Transverse colon (tissue), 4 donors: ENCODE measurements at regions of chr9 and their contacts with region 1.

Region 1: DNA sequence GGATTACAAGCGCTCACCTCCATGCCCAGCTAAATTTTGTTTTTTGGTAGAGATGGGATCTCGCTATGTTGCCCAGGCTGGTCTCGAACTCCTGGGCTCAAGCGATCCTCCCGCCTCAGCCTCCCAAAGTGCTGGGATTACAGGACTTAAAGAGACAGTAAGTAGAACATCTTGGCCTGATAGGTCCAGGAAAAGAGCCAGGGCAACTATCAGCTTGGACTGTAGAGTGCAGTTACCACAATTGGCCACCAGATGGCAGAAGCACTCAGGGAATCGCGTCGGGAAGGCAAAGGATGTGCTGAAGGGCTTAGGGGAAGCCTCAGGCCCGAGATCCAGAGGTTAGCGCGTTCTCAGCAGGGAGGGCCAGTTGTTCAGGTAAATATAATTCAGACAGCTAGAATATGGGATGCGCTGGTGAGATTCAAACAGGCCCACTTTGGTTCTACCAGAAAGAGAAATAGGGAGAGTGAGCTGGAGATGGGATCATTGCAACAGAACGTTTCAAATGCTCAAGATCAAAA is 21.5 kb downstream of the C9orf57 start:
- DNase-seq: peak; percentile 85
- H3K4me3 ChIP-seq: no peak overlapping the region
- H3K27ac ChIP-seq: no peak overlapping the region
- H3K4me1 ChIP-seq: peaks cover 0 to 4% (median 0%) of the 10 kb centered on the region in 4 donors
- H3K27me3 ChIP-seq: no peaks in the 10 kb centered on the region
- CTCF ChIP-seq: peak; percentile 93 to 99 (median 96)
- EP300 ChIP-seq: no peak
- POLR2A ChIP-seq: no peak

Region 2: GRCh38 chr9:71819115-71819739 is 219.7 kb before region 1 on chr9:
- in situ Hi-C with region 1: loop called in 1 of 4 experiments (anchors 10 kb)
- intact Hi-C with region 1: no loop called
- DNase-seq: peak; percentile 32
- H3K4me3 ChIP-seq: no peak overlapping the region
- H3K27ac ChIP-seq: no peak overlapping the region
- H3K4me1 ChIP-seq: peaks cover 0 to 6% (median 0%) of the 10 kb centered on the region in 4 donors
- H3K27me3 ChIP-seq: no peaks in the 10 kb centered on the region
- CTCF ChIP-seq: peak; percentile 60 to 79 (median 72)
- EP300 ChIP-seq: no peak
- POLR2A ChIP-seq: no peak

Region 3: DNA sequence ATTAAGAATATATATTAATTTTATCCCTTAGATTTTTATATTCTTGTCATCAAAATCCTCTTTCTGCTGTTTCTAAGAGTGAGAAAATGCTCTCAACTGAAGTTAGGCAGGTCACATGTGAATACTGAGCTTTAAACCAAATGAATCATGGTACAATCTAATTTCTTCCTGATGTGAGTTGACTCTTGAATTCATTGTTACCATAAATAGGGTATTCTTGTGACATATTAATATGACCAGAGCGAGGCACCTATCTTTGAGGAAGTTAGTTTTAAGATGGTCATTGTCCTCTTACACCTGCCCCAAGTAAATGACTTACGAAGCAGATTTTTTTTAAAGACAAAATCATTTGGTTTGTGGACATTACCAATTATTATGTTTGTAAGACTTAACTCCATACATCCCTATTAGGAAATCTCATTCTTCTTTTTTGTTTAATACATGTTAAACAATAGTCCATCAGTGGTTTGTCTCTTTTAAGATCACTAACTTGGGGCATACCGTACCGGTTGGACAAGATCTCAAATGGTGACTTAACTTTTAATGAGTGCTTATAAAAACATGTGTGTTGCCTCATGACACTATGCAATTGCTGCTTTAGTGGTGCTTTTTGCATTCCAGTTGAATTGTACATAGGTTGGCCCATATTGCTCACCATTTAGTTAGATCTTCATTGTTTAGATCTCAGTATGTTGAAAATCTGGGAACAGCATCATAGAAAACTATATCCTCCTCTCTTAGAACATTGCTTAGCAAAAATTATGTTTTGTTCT is 109.9 kb before region 1 on chr9:
- in situ Hi-C with region 1: no loop called
- intact Hi-C with region 1: no loop called
- DNase-seq: no peak
- H3K4me3 ChIP-seq: no peak overlapping the region
- H3K27ac ChIP-seq: no peak overlapping the region
- H3K4me1 ChIP-seq: peaks cover 0 to 31% (median 8%) of the 10 kb centered on the region in 4 donors
- H3K27me3 ChIP-seq: no peaks in the 10 kb centered on the region
- CTCF ChIP-seq: no peak
- EP300 ChIP-seq: no peak
- POLR2A ChIP-seq: no peak

Region 4: GRCh38 chr9:71985297-71985911 is 53.5 kb before region 1 on chr9:
- in situ Hi-C with region 1: no loop called
- intact Hi-C with region 1: no loop called
- DNase-seq: no peak
- H3K4me3 ChIP-seq: peak overlapping the region in 1 of 4 donors; percentile 15
- H3K27ac ChIP-seq: peak overlapping the region; percentile 42 to 73 (median 72)
- H3K4me1 ChIP-seq: peaks cover 0 to 10% (median 5%) of the 10 kb centered on the region in 4 donors
- H3K27me3 ChIP-seq: no peaks in the 10 kb centered on the region
- CTCF ChIP-seq: peak in 4 of 5 experiments; percentile 18 to 47 (median 20)
- EP300 ChIP-seq: no peak
- POLR2A ChIP-seq: no peak

Region 5: DNA sequence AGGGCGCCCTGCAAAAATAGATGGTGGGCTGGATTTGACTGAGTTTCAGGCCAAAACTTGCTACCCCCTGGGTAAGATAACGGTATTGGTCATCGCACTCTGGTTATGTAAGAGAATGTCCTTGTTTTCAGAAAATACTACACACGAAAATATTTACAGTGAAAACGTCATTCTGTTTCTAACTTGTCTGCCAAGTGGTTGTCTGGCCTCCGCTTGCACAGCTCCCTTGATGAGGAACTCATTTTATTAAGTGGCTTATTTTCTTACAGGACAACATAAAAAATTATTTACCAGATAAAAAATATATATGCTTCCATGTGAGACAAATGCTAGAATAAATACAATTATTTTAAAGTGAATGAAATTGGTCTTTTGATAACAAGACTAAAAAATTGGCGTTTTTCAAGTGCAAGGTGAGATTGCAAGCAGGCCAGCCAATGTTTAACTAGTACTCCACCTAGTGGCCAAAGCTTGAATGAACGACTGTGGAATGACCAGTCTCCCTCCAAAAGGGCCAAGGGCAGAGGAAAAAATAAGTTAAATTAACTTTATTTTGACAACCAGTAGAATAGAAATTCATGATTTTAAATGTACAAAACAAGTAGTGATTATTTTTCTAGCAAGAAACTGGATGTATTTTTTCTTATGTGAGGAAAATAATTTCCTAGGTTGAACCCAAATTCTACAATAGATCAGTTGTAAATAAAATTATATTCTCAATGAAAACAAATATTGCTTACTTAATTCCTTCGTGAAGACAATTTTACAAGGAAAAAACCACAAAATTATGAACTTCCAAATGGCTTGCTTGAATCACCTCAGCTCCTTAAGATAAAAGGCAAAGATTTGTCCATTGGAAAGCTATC is 232.9 kb after region 1 on chr9:
- in situ Hi-C with region 1: loop called (anchors 5 kb)
- intact Hi-C with region 1: loop called (anchors 5 kb)
- DNase-seq: peak; percentile 47
- H3K4me3 ChIP-seq: no peak overlapping the region
- H3K27ac ChIP-seq: no peak overlapping the region
- H3K4me1 ChIP-seq: no peaks in the 10 kb centered on the region
- H3K27me3 ChIP-seq: no peaks in the 10 kb centered on the region
- CTCF ChIP-seq: peak; percentile 81 to 89 (median 87)
- EP300 ChIP-seq: no peak
- POLR2A ChIP-seq: no peak

Region 6: DNA sequence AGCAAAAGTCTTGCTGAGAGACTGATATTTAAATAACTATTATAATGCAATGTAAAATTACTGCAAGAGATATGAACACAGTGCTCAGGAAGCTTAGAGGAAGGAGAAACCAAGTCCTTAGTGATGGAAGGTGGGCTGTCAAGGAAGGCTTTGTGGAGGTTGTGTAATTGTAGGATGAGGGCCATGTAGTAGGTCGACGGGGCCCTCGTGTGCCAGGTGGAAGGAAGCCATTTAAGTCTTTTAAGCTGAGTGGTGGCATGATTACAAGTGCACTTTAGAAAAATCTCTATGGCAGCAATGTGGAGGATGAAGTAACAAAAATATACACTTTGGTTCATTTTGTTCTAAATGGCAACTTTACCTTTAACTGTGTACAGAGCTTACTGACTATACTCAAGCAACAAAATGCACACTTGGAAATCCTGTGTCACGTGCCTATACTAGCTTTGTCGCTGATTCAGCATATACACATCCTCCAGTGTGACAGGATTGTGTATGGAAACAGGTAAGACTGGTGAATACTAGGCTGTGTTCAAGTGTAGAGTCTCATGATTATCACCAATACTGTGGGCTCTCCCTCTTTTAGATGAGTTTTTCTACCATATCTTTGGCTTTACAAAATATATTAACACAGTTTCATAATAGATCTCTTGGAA is 561.1 kb after region 1 on chr9:
- in situ Hi-C with region 1: loop called in 1 of 4 experiments (anchors 25 kb)
- intact Hi-C with region 1: no loop called
- DNase-seq: no peak
- H3K4me3 ChIP-seq: no peak overlapping the region
- H3K27ac ChIP-seq: no peak overlapping the region
- H3K4me1 ChIP-seq: peaks cover 0 to 8% (median 5%) of the 10 kb centered on the region in 4 donors
- H3K27me3 ChIP-seq: no peaks in the 10 kb centered on the region
- CTCF ChIP-seq: no peak
- EP300 ChIP-seq: no peak
- POLR2A ChIP-seq: no peak

Region 7: DNA sequence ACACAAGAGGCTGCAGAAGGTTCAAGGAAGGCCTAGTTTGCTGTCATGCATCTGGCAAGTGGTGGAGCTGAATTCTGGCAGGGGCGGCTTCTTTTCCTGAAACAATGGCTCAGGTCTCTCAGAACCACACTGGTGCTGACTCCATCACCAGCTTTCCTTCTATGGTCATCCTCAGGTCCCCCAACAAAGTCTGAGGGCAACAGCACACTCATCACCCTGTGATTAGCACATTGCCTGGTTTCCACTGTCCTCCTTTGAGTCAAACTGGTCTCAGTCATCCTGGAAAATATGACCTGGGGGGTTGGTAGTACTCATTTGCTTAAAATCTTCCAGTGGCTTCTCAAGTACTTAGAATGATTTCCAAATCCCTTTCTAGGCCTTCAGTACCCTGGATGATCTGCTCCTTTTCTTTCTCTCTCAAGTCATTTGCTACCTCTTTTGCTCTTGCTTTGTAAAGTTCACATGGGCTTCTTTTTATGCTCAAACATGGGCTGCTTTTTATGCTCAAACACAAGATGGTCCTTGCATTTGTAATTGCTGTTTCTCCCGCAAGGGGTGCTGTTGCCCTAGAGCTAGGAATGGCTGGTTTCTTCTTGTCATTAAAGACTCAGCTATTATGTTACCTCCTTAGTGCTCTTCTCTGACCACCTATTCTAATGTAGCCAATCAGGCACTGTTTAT is 769.0 kb after region 1 on chr9:
- in situ Hi-C with region 1: loop called in 1 of 4 experiments (anchors 25 kb)
- intact Hi-C with region 1: no loop called
- DNase-seq: no peak
- H3K4me3 ChIP-seq: no peak overlapping the region
- H3K27ac ChIP-seq: no peak overlapping the region
- H3K4me1 ChIP-seq: peaks cover 0 to 6% (median 0%) of the 10 kb centered on the region in 4 donors
- H3K27me3 ChIP-seq: no peaks in the 10 kb centered on the region
- CTCF ChIP-seq: no peak
- EP300 ChIP-seq: no peak
- POLR2A ChIP-seq: no peak

Region 8: GRCh38 chr9:72827950-72828731 is 789.2 kb after region 1 on chr9:
- in situ Hi-C with region 1: loop called in 2 of 4 experiments (anchors 10 to 25 kb)
- intact Hi-C with region 1: no loop called
- DNase-seq: no peak
- H3K4me3 ChIP-seq: no peak overlapping the region
- H3K27ac ChIP-seq: peak overlapping the region in 1 of 4 donors; percentile 19
- H3K4me1 ChIP-seq: peaks cover 0 to 20% (median 11%) of the 10 kb centered on the region in 4 donors
- H3K27me3 ChIP-seq: no peaks in the 10 kb centered on the region
- CTCF ChIP-seq: no peak
- EP300 ChIP-seq: no peak
- POLR2A ChIP-seq: no peak

Region 9: GRCh38 chr9:73183917-73184861 is 1145.2 kb after region 1 on chr9:
- in situ Hi-C with region 1: loop called in 1 of 4 experiments (anchors 25 kb)
- intact Hi-C with region 1: no loop called
- DNase-seq: no peak
- H3K4me3 ChIP-seq: no peak overlapping the region
- H3K27ac ChIP-seq: no peak overlapping the region
- H3K4me1 ChIP-seq: no peaks in the 10 kb centered on the region
- H3K27me3 ChIP-seq: no peaks in the 10 kb centered on the region
- CTCF ChIP-seq: peak; percentile 52 to 73 (median 60)
- EP300 ChIP-seq: no peak
- POLR2A ChIP-seq: no peak